CD4-positive, alpha-beta T cell (primary cell): ENCODE measurements at regions of chr7 and their contacts with region 1.

Region 1: DNA sequence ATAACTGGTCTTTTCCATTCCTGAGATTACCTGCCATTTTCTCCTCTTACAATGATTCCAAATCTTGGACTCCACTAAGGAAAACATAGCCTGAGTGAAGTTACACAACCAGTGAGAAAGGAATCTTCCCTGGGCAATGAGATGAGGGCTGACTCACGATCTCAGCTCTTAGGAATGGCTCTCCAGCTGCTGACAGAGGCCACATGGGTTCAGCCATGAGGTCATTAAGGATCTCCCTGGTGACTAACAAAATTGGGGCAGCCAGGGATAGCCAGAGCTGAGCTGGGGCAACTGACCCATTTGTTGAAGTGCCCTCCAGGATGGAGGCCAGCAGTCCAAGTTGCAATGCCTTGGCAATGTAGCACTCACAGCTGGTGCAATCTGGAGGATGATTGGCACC is 78.7 kb upstream of the MKLN1 start:
- DNase-seq: no peak
- ATAC-seq: no peak
- H3K4me3 ChIP-seq: no peak overlapping the region
- H3K4me3 Mint-ChIP-seq: no peak overlapping the region
- H3K27ac ChIP-seq: no peak overlapping the region
- H3K27ac Mint-ChIP-seq: no peak overlapping the region
- H3K4me1 ChIP-seq: no peaks in the 10 kb centered on the region
- H3K4me1 Mint-ChIP-seq: no peaks in the 10 kb centered on the region
- H3K27me3 ChIP-seq: no peaks in the 10 kb centered on the region
- H3K27me3 Mint-ChIP-seq: peaks cover 6% of the 10 kb centered on the region
- CTCF ChIP-seq: no peak

Region 2: GRCh38 chr7:130831817-130832481 is 417.1 kb before region 1 on chr7:
- CTCF ChIA-PET with region 1: no interaction called
- POLR2A ChIA-PET with region 1: no interaction called
- intact Hi-C with region 1: no loop called
- DNase-seq: peak in 4 of 14 experiments; percentile 9 to 71 (median 50)
- ATAC-seq: no peak
- H3K4me3 ChIP-seq: no peak overlapping the region
- H3K4me3 Mint-ChIP-seq: no peak overlapping the region
- H3K27ac ChIP-seq: no peak overlapping the region
- H3K27ac Mint-ChIP-seq: no peak overlapping the region
- H3K4me1 ChIP-seq: no peaks in the 10 kb centered on the region
- H3K4me1 Mint-ChIP-seq: no peaks in the 10 kb centered on the region
- H3K27me3 ChIP-seq: no peaks in the 10 kb centered on the region
- H3K27me3 Mint-ChIP-seq: peaks cover 22% of the 10 kb centered on the region
- CTCF ChIP-seq: peak; percentile 89

Region 3: GRCh38 chr7:131302876-131303707 is 54.1 kb after region 1 on chr7:
- CTCF ChIA-PET with region 1: no interaction called
- POLR2A ChIA-PET with region 1: no interaction called
- intact Hi-C with region 1: loop called in 1 of 2 experiments (anchors 5 kb)
- DNase-seq: peak in 13 of 14 experiments; percentile 12 to 64 (median 24)
- ATAC-seq: peak; percentile 65
- H3K4me3 ChIP-seq: no peak overlapping the region
- H3K4me3 Mint-ChIP-seq: no peak overlapping the region
- H3K27ac ChIP-seq: no peak overlapping the region
- H3K27ac Mint-ChIP-seq: no peak overlapping the region
- H3K4me1 ChIP-seq: no peaks in the 10 kb centered on the region
- H3K4me1 Mint-ChIP-seq: no peaks in the 10 kb centered on the region
- H3K27me3 ChIP-seq: no peaks in the 10 kb centered on the region
- H3K27me3 Mint-ChIP-seq: no peaks in the 10 kb centered on the region
- CTCF ChIP-seq: peak; percentile 70